Heart left ventricle (tissue), 16 donors: ENCODE measurements at regions of chr17 and their contacts with region 1.

Region 1: DNA sequence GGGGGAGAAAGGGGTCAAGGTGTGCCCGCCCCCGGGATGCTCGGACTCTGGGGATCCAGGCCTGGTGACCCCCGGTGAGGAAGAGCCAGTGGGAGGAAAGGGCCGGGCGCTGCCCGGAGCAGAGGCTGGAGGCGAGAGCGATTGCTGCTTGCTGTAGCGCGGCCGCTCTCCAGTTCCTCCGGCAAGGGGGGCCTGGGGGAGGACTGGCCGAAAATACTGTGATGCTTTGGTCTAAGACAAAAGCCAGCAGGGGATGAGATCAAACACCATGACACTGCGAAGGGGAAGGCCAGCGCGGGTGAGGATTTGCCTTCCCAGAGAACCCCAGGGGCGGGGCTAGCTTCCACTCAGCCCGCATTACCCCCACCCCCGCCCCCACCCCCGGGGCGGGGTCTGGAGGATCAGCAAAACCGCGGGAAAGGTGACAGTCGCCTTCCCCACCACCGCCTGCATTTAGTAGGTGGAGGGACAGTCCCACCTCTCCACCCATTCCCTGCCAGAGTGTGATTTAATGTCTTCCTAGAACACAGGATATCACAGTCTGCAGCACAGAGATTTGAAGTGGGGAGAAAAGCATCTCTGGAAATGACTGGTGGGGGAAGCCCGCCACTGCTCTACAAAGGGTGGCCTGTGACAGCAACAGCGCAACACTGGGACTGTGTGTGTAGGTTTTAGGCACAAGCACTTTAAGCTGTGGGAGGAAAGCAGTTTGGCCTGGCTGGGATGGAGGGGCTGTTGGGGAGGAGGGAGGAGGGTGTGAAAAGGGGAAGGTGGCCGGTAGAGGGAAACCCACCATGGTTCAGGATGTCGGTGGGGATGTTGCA is 25.7 kb downstream of the MRC2 start:
- DNase-seq: peak; percentile 64 to 87 (median 71)
- ATAC-seq: peak; percentile 19 to 66 (median 56)
- H3K4me3 ChIP-seq: peak overlapping the region; percentile 13 to 58 (median 51)
- H3K27ac ChIP-seq: peak overlapping the region in 11 of 12 donors; percentile 29 to 82 (median 66)
- H3K4me1 ChIP-seq: peaks cover 0 to 51% (median 37%) of the 10 kb centered on the region in 12 donors
- H3K27me3 ChIP-seq: no peaks in the 10 kb centered on the region
- CTCF ChIP-seq: no peak
- POLR2A ChIP-seq: no peak

Region 2: GRCh38 chr17:62444063-62444462 is 209.2 kb before region 1 on chr17:
- intact Hi-C with region 1: no loop called
- DNase-seq: no peak
- ATAC-seq: no peak
- H3K4me3 ChIP-seq: no peak overlapping the region
- H3K27ac ChIP-seq: no peak overlapping the region
- H3K4me1 ChIP-seq: no peaks in the 10 kb centered on the region
- H3K27me3 ChIP-seq: no peaks in the 10 kb centered on the region
- CTCF ChIP-seq: no peak
- POLR2A ChIP-seq: no peak

Region 3: GRCh38 chr17:62601471-62601870 is 51.7 kb before region 1 on chr17:
- intact Hi-C with region 1: loop called in 1 of 10 experiments (anchors 10 kb)
- DNase-seq: no peak
- ATAC-seq: peak in 2 of 4 donors; percentile 61 to 66
- H3K4me3 ChIP-seq: no peak overlapping the region
- H3K27ac ChIP-seq: peak overlapping the region in 2 of 12 donors; percentile 11 to 25
- H3K4me1 ChIP-seq: peaks cover 0 to 11% (median 0%) of the 10 kb centered on the region in 12 donors
- H3K27me3 ChIP-seq: no peaks in the 10 kb centered on the region
- CTCF ChIP-seq: peak in 5 of 12 donors; percentile 10 to 41 (median 26)
- POLR2A ChIP-seq: no peak

Region 4: DNA sequence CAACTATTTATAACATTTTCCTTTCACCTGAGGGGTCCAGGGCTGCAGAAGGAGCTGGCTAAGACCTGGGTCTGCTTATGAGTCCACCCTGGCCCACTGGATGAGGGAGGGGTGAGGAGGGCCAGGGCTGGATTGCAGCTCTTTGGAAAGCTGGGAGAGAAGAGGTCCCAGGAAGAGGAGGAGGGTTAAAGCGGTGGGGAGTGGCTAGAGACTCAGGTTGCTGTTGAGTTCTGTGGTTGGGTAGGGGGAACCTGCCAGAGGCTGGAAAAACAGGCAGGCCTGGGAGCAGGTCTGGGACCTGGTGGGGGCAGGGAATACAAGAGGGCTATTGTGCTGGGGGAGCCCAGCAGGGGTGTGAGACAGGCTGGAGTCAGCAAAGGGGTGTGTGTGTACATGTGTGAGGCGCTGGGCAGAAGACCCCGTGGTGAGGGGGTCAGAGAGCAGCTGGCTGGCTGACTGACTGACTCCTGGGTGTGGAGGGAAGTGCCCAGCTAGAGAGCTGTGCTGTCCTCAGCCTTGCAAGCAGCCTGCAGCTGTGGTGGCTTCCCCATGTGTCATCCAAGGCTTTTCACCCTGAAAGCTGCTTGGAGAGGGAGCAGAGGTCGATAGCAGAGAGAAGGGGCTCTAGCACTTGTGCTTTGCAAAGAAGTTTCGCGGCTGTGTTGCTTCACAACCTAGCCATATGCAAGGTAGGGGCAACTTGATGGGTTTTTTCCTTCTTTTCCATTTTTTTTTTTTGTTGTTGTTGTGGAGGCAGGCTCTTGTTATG is 35.9 kb before region 1 on chr17:
- intact Hi-C with region 1: no loop called
- DNase-seq: no peak
- ATAC-seq: no peak
- H3K4me3 ChIP-seq: no peak overlapping the region
- H3K27ac ChIP-seq: no peak overlapping the region
- H3K4me1 ChIP-seq: peaks cover 0 to 52% (median 4%) of the 10 kb centered on the region in 12 donors
- H3K27me3 ChIP-seq: no peaks in the 10 kb centered on the region
- CTCF ChIP-seq: no peak
- POLR2A ChIP-seq: no peak

Region 5: GRCh38 chr17:62627219-62627910 is 25.8 kb before region 1 on chr17 and contains the start of gene MRC2:
- intact Hi-C with region 1: loop called in 1 of 10 experiments (anchors 2 kb)
- DNase-seq: peak; percentile 77 to 86 (median 83)
- ATAC-seq: peak; percentile 21 to 74 (median 72)
- H3K4me3 ChIP-seq: peak within 1 kb of the TSS; percentile 37 to 89 (median 64)
- H3K27ac ChIP-seq: peak within 1 kb of the TSS; percentile 70 to 97 (median 84)
- H3K4me1 ChIP-seq: peaks cover 0 to 31% (median 13%) of the 10 kb centered on the region in 12 donors
- H3K27me3 ChIP-seq: peaks cover 0 to 31% (median 9%) of the 10 kb centered on the region in 9 donors
- CTCF ChIP-seq: peak in 1 of 12 donors; percentile 4
- POLR2A ChIP-seq: peak in 1 of 2 donors; percentile 22
- total RNA-seq, gene MRC2: 13.4 to 50.8 (median 23.3) TPM